Vagina (tissue), 2 donors: ENCODE measurements at regions of chr3 and their contacts with region 1.

Region 1: GRCh38 chr3:101827211-101828174 is 21.8 kb upstream of the NFKBIZ start:
- DNase-seq: no peak
- H3K4me3 ChIP-seq: peak overlapping the region; percentile 61 to 68
- H3K27ac ChIP-seq: peak overlapping the region; percentile 92
- H3K4me1 ChIP-seq: peaks cover 41% of the 10 kb centered on the region
- H3K27me3 ChIP-seq: no peaks in the 10 kb centered on the region
- CTCF ChIP-seq: no peak
- POLR2A ChIP-seq: peak in 1 of 2 donors; percentile 51

Region 2: GRCh38 chr3:101849051-101849720 is 21.7 kb after region 1 on chr3 and contains the start of gene NFKBIZ:
- intact Hi-C with region 1: loop called (anchors 2 kb)
- DNase-seq: peak in 1 of 2 donors; percentile 98
- H3K4me3 ChIP-seq: peak within 1 kb of the TSS; percentile 65 to 91
- H3K27ac ChIP-seq: peak within 1 kb of the TSS; percentile 99
- H3K4me1 ChIP-seq: peaks cover 25% of the 10 kb centered on the region
- H3K27me3 ChIP-seq: no peaks in the 10 kb centered on the region
- CTCF ChIP-seq: no peak
- POLR2A ChIP-seq: peak; percentile 33 to 96
- total RNA-seq, gene NFKBIZ: 136 TPM

Region 3: DNA sequence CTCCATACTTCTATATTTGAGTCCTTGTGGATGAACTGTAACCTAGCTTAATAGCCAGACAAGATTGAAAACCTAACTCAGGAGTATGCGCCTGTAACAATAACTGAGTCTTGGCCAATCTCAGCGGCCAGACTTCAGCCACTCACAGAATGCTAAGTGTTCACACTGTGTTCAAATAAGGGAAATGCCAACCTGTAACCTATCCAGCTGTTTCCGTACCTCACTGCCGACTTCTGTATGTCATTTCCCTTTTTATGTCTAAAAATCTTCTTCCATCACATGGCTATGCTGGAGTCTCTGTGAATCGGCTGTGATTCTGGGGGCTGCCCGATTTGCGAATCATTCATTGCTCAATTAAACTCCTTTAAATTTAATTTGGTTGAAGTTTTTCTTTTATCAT is 191.1 kb after region 1 on chr3:
- intact Hi-C with region 1: no loop called
- DNase-seq: no peak
- H3K4me3 ChIP-seq: no peak overlapping the region
- H3K27ac ChIP-seq: no peak overlapping the region
- H3K4me1 ChIP-seq: no peaks in the 10 kb centered on the region
- H3K27me3 ChIP-seq: no peaks in the 10 kb centered on the region
- CTCF ChIP-seq: no peak
- POLR2A ChIP-seq: no peak